Vagina (tissue), 2 donors: ENCODE measurements at regions of chr1 and their contacts with region 1.

Region 1: GRCh38 chr1:175071276-175071943 is 3.8 kb downstream of the TNN start:
- DNase-seq: no peak
- H3K4me3 ChIP-seq: no peak overlapping the region
- H3K27ac ChIP-seq: peak overlapping the region; percentile 67
- H3K4me1 ChIP-seq: peaks cover 16% of the 10 kb centered on the region
- H3K27me3 ChIP-seq: no peaks in the 10 kb centered on the region
- CTCF ChIP-seq: no peak
- POLR2A ChIP-seq: no peak

Region 2: DNA sequence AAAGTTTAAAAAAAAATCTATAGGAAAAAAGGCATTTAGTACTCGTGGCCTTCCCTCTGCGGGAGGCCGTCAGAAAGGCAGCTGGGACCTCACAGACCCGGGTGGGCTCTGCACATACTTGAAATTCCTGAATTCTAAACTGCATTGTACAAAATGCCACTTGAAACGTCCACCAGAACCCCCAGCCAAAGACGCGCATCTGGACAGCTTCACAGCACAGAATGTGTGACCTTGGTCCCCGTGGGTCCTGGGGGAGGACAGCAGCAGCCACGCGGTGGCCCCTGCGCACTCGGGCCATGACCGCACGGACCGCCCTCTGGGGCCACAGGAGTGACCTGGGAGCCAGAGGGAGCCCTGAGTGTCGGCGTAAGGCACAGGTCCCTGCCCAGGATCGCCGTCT is 27.6 kb before region 1 on chr1:
- intact Hi-C with region 1: loop called (anchors 1 kb)
- DNase-seq: no peak
- H3K4me3 ChIP-seq: no peak overlapping the region
- H3K27ac ChIP-seq: no peak overlapping the region
- H3K4me1 ChIP-seq: no peaks in the 10 kb centered on the region
- H3K27me3 ChIP-seq: no peaks in the 10 kb centered on the region
- CTCF ChIP-seq: no peak
- POLR2A ChIP-seq: no peak

Region 3: GRCh38 chr1:176033881-176034280 is 962.5 kb after region 1 on chr1:
- intact Hi-C with region 1: loop called (anchors 5 kb)
- DNase-seq: no peak
- H3K4me3 ChIP-seq: no peak overlapping the region
- H3K27ac ChIP-seq: no peak overlapping the region
- H3K4me1 ChIP-seq: peaks cover 21% of the 10 kb centered on the region
- H3K27me3 ChIP-seq: no peaks in the 10 kb centered on the region
- CTCF ChIP-seq: no peak
- POLR2A ChIP-seq: no peak